ENCODE measurements at regions of chr19 and their contacts with region 1.

Region 1: DNA sequence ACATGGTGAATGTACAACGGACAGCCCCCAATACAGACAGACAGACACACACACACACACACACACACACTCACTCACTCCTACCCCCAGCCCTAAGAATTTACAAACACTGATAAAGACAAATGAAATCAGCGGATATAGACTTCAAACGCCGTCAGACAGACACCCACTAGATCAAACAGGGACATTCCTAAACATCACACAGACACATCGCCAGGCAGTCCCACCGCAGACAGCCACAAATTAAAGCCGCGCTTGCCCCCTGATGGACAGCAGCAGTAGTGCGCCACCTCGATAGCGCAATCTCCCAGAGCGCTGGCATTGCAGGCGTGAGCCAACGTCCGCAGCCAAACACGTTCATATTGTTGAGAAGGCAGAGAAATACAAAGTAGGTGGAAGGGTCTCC is 24.7 kb upstream of the ADGRE1 start:
- DNase-seq: peak; percentile 77 to 86 (median 81)
- H3K4me3 ChIP-seq: no peak overlapping the region
- H3K4me3 Mint-ChIP-seq: peak overlapping the region; percentile 59 to 70
- H3K27ac ChIP-seq: no peak overlapping the region
- H3K27ac Mint-ChIP-seq: peak overlapping the region; percentile 13 to 89 (median 73)
- H3K4me1 ChIP-seq: peaks cover 23 to 31% of the 10 kb centered on the region in 2 donors
- H3K4me1 Mint-ChIP-seq: peaks cover 28% of the 10 kb centered on the region
- H3K27me3 ChIP-seq: no peaks in the 10 kb centered on the region
- H3K27me3 Mint-ChIP-seq: peaks cover 0 to 13% (median 0%) of the 10 kb centered on the region in 3 donors
- CTCF ChIP-seq: peak; percentile 62

Region 2: GRCh38 chr19:6516659-6517291 is 345.9 kb before region 1 on chr19:
- intact Hi-C with region 1: loop called in 1 of 2 experiments (anchors 2 kb)
- DNase-seq: peak; percentile 78 to 86 (median 84)
- H3K4me3 ChIP-seq: peak overlapping the region; percentile 65 to 82 (median 74)
- H3K4me3 Mint-ChIP-seq: peak overlapping the region; percentile 98 to 100
- H3K27ac ChIP-seq: peak overlapping the region; percentile 38 to 52
- H3K27ac Mint-ChIP-seq: peak overlapping the region; percentile 83 to 97 (median 89)
- H3K4me1 ChIP-seq: peaks cover 18 to 31% of the 10 kb centered on the region in 2 donors
- H3K4me1 Mint-ChIP-seq: peaks cover 25% of the 10 kb centered on the region
- H3K27me3 ChIP-seq: no peaks in the 10 kb centered on the region
- H3K27me3 Mint-ChIP-seq: peaks cover 5 to 28% (median 20%) of the 10 kb centered on the region in 3 donors
- CTCF ChIP-seq: peak; percentile 94

Region 3: DNA sequence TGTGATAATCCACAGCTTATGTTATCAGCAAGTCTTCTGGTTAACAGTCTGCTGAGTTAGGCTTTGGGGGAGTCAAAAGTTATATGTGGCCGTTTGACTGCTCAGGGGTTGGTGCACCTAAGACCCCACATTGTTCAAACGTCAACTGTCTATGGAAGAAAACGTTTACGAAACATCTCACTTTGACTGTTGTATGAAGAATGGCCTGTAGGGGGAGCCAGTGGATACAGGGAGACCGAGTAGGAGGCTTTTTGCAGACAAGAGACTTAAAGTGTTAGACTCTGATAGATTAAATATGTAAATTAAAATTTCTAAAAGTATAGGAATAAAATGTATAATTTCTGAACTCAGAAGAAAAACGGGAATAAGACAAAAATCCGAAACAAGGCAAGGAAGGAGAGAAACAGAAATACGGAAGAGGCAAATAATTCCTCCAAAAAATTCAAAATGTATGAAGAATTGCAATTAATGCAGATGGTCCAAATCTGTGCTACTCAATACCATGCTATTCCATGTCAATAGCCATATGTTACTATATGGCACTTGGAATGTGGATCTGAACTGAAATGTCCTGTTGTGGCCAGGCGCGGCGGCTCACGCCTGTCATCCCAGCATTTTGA is 230.6 kb before region 1 on chr19:
- intact Hi-C with region 1: loop called in 1 of 2 experiments (anchors 10 kb)
- DNase-seq: peak; percentile 63 to 74 (median 70)
- H3K4me3 ChIP-seq: no peak overlapping the region
- H3K4me3 Mint-ChIP-seq: no peak overlapping the region
- H3K27ac ChIP-seq: no peak overlapping the region
- H3K27ac Mint-ChIP-seq: no peak overlapping the region
- H3K4me1 ChIP-seq: no peaks in the 10 kb centered on the region
- H3K4me1 Mint-ChIP-seq: peaks cover 5% of the 10 kb centered on the region
- H3K27me3 ChIP-seq: peaks cover 2 to 6% of the 10 kb centered on the region in 2 donors
- H3K27me3 Mint-ChIP-seq: peaks cover 25 to 64% (median 46%) of the 10 kb centered on the region in 3 donors
- CTCF ChIP-seq: peak; percentile 87

Region 4: DNA sequence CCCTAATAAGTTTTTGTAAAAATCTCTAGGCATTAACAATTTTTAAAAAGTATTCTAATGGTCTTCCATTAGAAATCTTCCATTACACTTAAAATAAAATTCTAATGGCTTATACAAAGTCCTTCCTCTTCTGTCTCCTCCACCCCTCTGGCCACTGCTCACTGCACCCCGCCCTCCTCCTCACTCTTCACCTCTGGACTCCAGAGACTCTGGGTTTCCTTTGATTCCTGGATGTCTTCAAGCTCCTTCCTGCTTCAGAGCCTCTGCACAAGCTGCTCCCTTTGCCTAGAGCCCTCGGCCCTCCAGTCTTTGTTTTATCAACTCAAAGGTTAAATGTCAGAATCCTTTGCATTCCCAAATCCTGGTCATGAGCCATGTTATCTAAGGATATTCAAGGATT is 213.5 kb before region 1 on chr19:
- intact Hi-C with region 1: loop called in 1 of 2 experiments (anchors 10 kb)
- DNase-seq: no peak
- H3K4me3 ChIP-seq: no peak overlapping the region
- H3K4me3 Mint-ChIP-seq: peak overlapping the region in 1 of 2 donors; percentile 42
- H3K27ac ChIP-seq: no peak overlapping the region
- H3K27ac Mint-ChIP-seq: no peak overlapping the region
- H3K4me1 ChIP-seq: no peaks in the 10 kb centered on the region
- H3K4me1 Mint-ChIP-seq: no peaks in the 10 kb centered on the region
- H3K27me3 ChIP-seq: peaks cover 40 to 63% of the 10 kb centered on the region in 2 donors
- H3K27me3 Mint-ChIP-seq: peaks cover 62 to 82% (median 72%) of the 10 kb centered on the region in 3 donors
- CTCF ChIP-seq: no peak

Region 5: GRCh38 chr19:6737284-6738046 is 125.2 kb before region 1 on chr19 and contains the start of gene GPR108:
- intact Hi-C with region 1: loop called (anchors 5 kb)
- DNase-seq: peak; percentile 100
- H3K4me3 ChIP-seq: peak within 1 kb of the TSS; percentile 72 to 97 (median 78)
- H3K4me3 Mint-ChIP-seq: peak within 1 kb of the TSS; percentile 95 to 97
- H3K27ac ChIP-seq: peak within 1 kb of the TSS; percentile 72 to 87
- H3K27ac Mint-ChIP-seq: peak within 1 kb of the TSS; percentile 89 to 98 (median 96)
- H3K4me1 ChIP-seq: peaks cover 50 to 56% of the 10 kb centered on the region in 2 donors
- H3K4me1 Mint-ChIP-seq: peaks cover 48% of the 10 kb centered on the region
- H3K27me3 ChIP-seq: peaks cover 0 to 8% of the 10 kb centered on the region in 2 donors
- H3K27me3 Mint-ChIP-seq: peaks cover 2 to 18% (median 17%) of the 10 kb centered on the region in 3 donors
- CTCF ChIP-seq: no peak
- polyA plus RNA-seq, gene GPR108: 90.9 to 147 (median 129) TPM

Region 6: DNA sequence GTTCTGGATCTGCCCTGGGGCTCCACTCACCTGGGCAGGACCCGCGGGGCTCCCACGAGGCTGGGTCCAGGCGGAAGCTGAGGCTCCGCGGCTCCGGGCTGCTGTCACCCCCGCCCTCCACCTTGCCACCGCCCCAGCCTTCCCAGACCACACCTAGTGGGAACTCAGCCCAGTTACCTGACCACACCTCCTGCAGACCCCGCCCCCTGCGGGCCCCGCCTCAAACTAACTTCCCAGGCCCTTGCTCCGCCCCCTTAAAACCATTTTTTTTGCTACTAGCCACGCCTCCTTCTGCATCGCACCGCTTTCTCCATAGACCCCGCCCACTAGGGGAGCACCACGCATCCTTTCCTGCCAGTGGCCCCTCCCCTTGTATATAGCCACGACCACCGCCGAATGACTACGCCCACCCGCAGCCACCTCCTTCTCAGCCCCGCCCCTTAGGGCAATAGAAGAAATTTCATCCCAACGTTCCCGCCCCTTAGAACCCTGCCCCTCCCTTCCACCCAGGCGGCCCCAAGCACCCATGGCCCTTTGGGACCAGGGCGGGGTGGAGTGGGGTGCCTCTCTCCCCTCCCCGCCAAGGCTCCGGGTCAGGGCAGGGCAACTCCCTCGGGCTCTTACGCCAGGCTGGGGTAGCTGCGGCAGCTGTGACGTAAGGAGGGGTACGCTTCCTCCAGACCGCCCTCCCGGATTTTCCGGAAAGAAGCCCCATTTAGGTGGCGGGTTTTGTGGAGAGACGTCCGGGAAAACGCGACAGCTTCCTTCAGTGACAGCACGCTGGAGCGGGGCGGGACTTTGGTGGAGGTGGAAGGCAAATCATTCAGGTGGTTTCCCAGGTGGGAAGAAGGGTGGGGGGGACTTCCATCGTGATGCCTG is 95.1 kb before region 1 on chr19 and contains the start of gene SH2D3A:
- intact Hi-C with region 1: loop called in 1 of 2 experiments (anchors 5 kb)
- DNase-seq: peak; percentile 77 to 97 (median 78)
- H3K4me3 ChIP-seq: peak within 1 kb of the TSS; percentile 16 to 74 (median 37)
- H3K4me3 Mint-ChIP-seq: peak within 1 kb of the TSS; percentile 82 to 90
- H3K27ac ChIP-seq: peak within 1 kb of the TSS; percentile 30 to 70
- H3K27ac Mint-ChIP-seq: peak within 1 kb of the TSS; percentile 86 to 94 (median 91)
- H3K4me1 ChIP-seq: peaks cover 28 to 45% of the 10 kb centered on the region in 2 donors
- H3K4me1 Mint-ChIP-seq: peaks cover 44% of the 10 kb centered on the region
- H3K27me3 ChIP-seq: peaks cover 0 to 13% of the 10 kb centered on the region in 2 donors
- H3K27me3 Mint-ChIP-seq: peaks cover 12 to 17% (median 15%) of the 10 kb centered on the region in 3 donors
- CTCF ChIP-seq: no peak
- polyA plus RNA-seq, gene SH2D3A: 0.11 TPM in 1 of 3 donors, not detected in the others

Region 7: DNA sequence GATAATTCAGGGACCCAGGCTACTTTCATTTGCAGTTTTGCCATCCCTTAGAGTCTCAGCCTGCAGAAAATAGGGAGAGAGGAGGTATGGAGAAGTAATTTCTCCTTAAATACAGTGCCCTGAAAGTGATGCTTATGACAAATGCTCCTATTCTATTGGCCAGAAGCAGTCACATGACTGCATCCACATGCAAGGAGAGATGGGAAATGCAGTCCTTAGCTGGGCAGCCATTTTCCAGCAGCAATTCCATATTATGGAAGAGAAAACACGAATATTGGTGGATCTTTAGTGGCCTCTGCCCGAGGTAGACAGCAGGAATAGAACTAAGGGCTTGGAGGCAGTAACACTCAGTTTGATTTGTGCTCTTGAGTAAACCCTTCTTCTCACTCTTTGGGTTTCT is 50.8 kb before region 1 on chr19:
- intact Hi-C with region 1: loop called in 1 of 2 experiments (anchors 5 kb)
- DNase-seq: peak; percentile 26 to 67 (median 43)
- H3K4me3 ChIP-seq: no peak overlapping the region
- H3K4me3 Mint-ChIP-seq: no peak overlapping the region
- H3K27ac ChIP-seq: peak overlapping the region in 1 of 2 donors; percentile 12
- H3K27ac Mint-ChIP-seq: peak overlapping the region in 5 of 7 donors; percentile 25 to 79 (median 71)
- H3K4me1 ChIP-seq: peaks cover 13 to 17% of the 10 kb centered on the region in 2 donors
- H3K4me1 Mint-ChIP-seq: peaks cover 31% of the 10 kb centered on the region
- H3K27me3 ChIP-seq: no peaks in the 10 kb centered on the region
- H3K27me3 Mint-ChIP-seq: no peaks in the 10 kb centered on the region
- CTCF ChIP-seq: no peak

Region 8: DNA sequence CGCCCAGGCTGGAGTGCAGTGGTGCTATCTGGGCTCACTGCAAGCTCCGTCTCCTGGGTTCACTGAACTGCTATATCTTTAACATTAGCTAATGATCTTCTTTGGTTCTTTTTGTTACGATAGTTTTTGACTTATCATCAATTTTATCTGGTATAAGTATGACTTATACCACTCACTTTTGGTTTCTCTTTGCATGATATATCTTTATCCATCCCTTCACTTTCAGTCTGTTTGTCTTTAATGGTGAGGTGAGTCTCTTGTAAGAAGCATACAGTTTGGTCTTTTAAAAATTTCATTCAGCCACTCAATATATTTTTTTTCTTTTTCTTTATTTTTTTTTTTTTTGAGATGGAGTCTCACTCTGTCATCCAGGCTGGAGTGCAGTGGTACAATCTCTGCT is 83.1 kb after region 1 on chr19:
- intact Hi-C with region 1: no loop called
- DNase-seq: no peak
- H3K4me3 ChIP-seq: no peak overlapping the region
- H3K4me3 Mint-ChIP-seq: no peak overlapping the region
- H3K27ac ChIP-seq: no peak overlapping the region
- H3K27ac Mint-ChIP-seq: no peak overlapping the region
- H3K4me1 ChIP-seq: no peaks in the 10 kb centered on the region
- H3K4me1 Mint-ChIP-seq: peaks cover 7% of the 10 kb centered on the region
- H3K27me3 ChIP-seq: no peaks in the 10 kb centered on the region
- H3K27me3 Mint-ChIP-seq: peaks cover 4 to 8% (median 5%) of the 10 kb centered on the region in 3 donors
- CTCF ChIP-seq: no peak

Measured in CD14-positive monocyte (primary cell).